CD4-positive, alpha-beta T cell (primary cell): ENCODE measurements at regions of chr17 and their contacts with region 1.

Region 1: GRCh38 chr17:42322382-42323267 is 34.3 kb downstream of the STAT5A start:
- DNase-seq: peak; percentile 89 to 98 (median 95)
- ATAC-seq: peak; percentile 97
- H3K4me3 ChIP-seq: no peak overlapping the region
- H3K4me3 Mint-ChIP-seq: no peak overlapping the region
- H3K27ac ChIP-seq: peak overlapping the region in 1 of 2 donors; percentile 18
- H3K27ac Mint-ChIP-seq: peak overlapping the region; percentile 76
- H3K4me1 ChIP-seq: peaks cover 26% of the 10 kb centered on the region
- H3K4me1 Mint-ChIP-seq: peaks cover 37% of the 10 kb centered on the region
- H3K27me3 ChIP-seq: no peaks in the 10 kb centered on the region
- H3K27me3 Mint-ChIP-seq: no peaks in the 10 kb centered on the region
- CTCF ChIP-seq: peak; percentile 100

Region 2: DNA sequence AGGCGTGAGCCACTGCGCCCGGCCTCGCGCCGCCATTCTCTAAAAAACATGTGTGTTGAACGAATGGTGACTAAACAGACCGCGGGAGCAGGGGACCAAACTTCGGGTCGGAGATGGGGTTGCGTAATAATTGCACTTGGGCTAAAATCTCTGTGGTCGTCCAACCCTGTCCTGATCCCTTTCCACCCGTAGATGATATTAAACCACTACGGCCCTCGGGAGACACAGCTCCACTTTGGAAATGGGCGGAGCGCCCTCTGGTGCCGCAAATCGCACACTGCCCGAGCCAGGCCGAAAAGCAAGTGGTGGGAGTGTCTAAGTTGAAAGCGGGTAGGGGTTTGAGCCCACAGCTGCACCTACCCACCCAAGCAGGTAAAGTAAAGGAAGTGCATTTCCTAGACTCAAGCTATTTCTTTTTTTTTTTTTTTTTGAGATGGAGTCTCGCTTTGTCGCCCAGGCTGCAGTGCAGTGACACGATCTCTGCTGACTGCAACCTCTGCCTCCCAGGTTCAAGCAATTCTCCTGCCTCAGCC is 83.4 kb after region 1 on chr17:
- CTCF ChIA-PET with region 1: interaction called, 187 read pairs
- POLR2A ChIA-PET with region 1: interaction called, 12 read pairs
- intact Hi-C with region 1: loop called (anchors 1 kb)
- DNase-seq: peak; percentile 70 to 90 (median 82)
- ATAC-seq: peak; percentile 88
- H3K4me3 ChIP-seq: no peak overlapping the region
- H3K4me3 Mint-ChIP-seq: no peak overlapping the region
- H3K27ac ChIP-seq: no peak overlapping the region
- H3K27ac Mint-ChIP-seq: no peak overlapping the region
- H3K4me1 ChIP-seq: peaks cover 13% of the 10 kb centered on the region
- H3K4me1 Mint-ChIP-seq: peaks cover 11% of the 10 kb centered on the region
- H3K27me3 ChIP-seq: no peaks in the 10 kb centered on the region
- H3K27me3 Mint-ChIP-seq: no peaks in the 10 kb centered on the region
- CTCF ChIP-seq: peak; percentile 76